A673 (cell line): ENCODE measurements at regions of chr2 and their contacts with region 1.

Region 1: GRCh38 chr2:79235135-79235534 is 75.6 kb upstream of the REG3A start:
- DNase-seq: peak; percentile 18
- H3K4me3 ChIP-seq: no peak overlapping the region
- H3K27ac ChIP-seq: no peak overlapping the region
- H3K4me1 ChIP-seq: no peaks in the 10 kb centered on the region
- H3K27me3 ChIP-seq: peaks cover 11% of the 10 kb centered on the region
- CTCF ChIP-seq: peak; percentile 47

Region 2: DNA sequence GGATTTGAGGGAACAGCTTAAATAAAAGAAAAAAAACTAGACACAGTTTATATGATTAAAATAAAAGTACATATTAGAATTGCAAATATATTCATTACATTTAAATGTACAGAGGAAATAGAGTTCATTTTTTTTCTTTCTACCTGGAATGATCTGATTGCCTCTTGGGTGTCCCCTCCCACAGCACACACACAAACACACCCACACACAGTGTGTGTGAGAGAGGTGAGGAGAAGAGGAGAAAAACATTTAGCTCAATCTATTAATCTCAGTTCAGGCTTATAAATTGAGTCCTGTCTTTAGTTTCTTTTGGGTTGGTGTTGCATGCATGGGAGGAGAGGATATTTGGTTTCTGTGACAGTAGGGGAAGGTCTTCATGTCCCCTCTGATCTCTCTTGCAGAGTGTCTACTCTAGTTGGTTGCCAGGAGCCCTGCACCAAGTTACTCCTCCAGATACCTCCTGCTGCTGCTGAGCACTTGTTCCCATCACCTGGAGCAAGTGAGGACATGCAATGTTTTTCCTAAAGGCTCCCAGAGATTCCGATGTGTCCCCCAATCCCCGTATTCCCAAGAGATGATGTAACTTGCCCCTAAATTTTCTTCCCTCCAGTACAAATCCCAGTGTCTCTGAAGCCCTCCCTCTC is 24.7 kb before region 1 on chr2:
- CTCF ChIA-PET with region 1: no interaction called
- POLR2A ChIA-PET with region 1: no interaction called
- intact Hi-C with region 1: no loop called
- DNase-seq: no peak
- H3K4me3 ChIP-seq: no peak overlapping the region
- H3K27ac ChIP-seq: no peak overlapping the region
- H3K4me1 ChIP-seq: no peaks in the 10 kb centered on the region
- H3K27me3 ChIP-seq: peaks cover 4% of the 10 kb centered on the region
- CTCF ChIP-seq: no peak

Region 3: GRCh38 chr2:79487399-79487798 is 252.3 kb after region 1 on chr2:
- CTCF ChIA-PET with region 1: no interaction called
- POLR2A ChIA-PET with region 1: no interaction called
- intact Hi-C with region 1: no loop called
- DNase-seq: no peak
- H3K4me3 ChIP-seq: no peak overlapping the region
- H3K27ac ChIP-seq: no peak overlapping the region
- H3K4me1 ChIP-seq: no peaks in the 10 kb centered on the region
- H3K27me3 ChIP-seq: no peaks in the 10 kb centered on the region
- CTCF ChIP-seq: no peak

Region 4: GRCh38 chr2:79860228-79861058 is 625.3 kb after region 1 on chr2:
- CTCF ChIA-PET with region 1: no interaction called
- POLR2A ChIA-PET with region 1: no interaction called
- intact Hi-C with region 1: loop called (anchors 5 kb)
- DNase-seq: peak; percentile 43
- H3K4me3 ChIP-seq: no peak overlapping the region
- H3K27ac ChIP-seq: no peak overlapping the region
- H3K4me1 ChIP-seq: no peaks in the 10 kb centered on the region
- H3K27me3 ChIP-seq: no peaks in the 10 kb centered on the region
- CTCF ChIP-seq: peak; percentile 63